Activated B cell treated with CpG ODN at 0.5 μM for 24 hours (primary cell): ENCODE measurements at regions of chr22 and their contacts with region 1.

Region 1: DNA sequence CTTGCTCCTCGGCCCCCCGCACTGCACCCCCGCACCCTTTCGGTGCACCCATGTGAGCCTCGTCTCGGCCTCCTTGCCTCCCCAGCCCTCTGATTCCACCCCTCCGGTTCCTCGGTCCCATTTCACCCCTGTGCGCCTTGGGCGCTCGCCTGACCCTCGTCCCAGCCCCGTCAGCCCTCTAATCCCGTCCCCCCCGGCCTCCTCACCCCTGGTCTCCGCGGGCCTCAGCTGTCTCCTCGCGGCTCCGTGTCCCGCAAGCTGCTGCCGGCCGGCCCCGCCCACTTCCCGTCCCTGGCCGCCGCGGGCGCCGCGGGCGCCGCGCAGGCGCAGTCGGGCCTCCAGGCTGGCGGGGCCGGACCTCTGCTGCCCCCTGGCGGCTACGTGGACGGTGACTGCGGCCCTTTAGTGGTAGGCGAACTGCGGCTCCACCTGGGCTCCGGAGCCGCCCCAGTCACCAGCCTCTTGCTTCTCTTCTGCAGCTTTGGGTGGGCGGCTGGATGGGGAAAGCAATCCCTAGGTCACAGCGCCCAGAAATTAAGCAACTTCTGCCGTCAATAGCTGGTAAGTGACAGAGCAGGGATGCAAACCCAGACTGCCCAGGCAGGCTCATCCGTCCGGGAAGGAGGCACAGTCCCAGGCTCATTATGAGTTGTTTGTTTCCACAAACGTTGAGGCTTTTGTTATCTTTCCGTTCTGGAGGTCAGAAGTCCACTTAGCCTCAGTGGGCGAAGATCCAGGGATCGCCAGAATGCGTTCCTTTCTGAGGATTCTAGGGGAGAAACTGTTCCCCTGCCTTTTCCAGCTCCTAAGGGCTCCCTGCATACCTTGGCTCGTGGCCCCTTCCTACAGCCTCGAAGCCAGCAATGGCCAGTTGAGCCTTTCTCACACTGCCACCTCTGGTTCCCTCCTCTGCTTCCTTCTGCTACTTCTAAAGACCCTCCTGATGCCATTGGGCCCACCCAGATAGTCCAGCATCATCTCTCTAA is at the start of gene PPM1F:
- DNase-seq: peak; percentile 98
- ATAC-seq: peak; percentile 86
- H3K4me3 Mint-ChIP-seq: peak within 1 kb of the TSS; percentile 93
- H3K27ac Mint-ChIP-seq: peak within 1 kb of the TSS; percentile 76
- H3K4me1 Mint-ChIP-seq: peaks cover 15% of the 10 kb centered on the region
- H3K27me3 Mint-ChIP-seq: no peaks in the 10 kb centered on the region
- CTCF ChIP-seq: no peak
- total RNA-seq, gene PPM1F: 18.2 and 21.1 TPM in 2 replicates

Region 2: GRCh38 chr22:21712894-21713712 is 239.8 kb before region 1 on chr22:
- CTCF ChIA-PET with region 1: interaction called, 13 read pairs
- POLR2A ChIA-PET with region 1: interaction called, 4 read pairs
- intact Hi-C with region 1: loop called (anchors 2 kb)
- DNase-seq: no peak
- ATAC-seq: peak; percentile 95
- H3K4me3 Mint-ChIP-seq: peak overlapping the region; percentile 28
- H3K27ac Mint-ChIP-seq: peak overlapping the region; percentile 27
- H3K4me1 Mint-ChIP-seq: peaks cover 7% of the 10 kb centered on the region
- H3K27me3 Mint-ChIP-seq: no peaks in the 10 kb centered on the region
- CTCF ChIP-seq: peak; percentile 25

Region 3: GRCh38 chr22:21719024-21719423 is 233.9 kb before region 1 on chr22:
- CTCF ChIA-PET with region 1: interaction called, 12 read pairs
- POLR2A ChIA-PET with region 1: no interaction called
- intact Hi-C with region 1: no loop called
- DNase-seq: no peak
- ATAC-seq: peak; percentile 37
- H3K4me3 Mint-ChIP-seq: peak overlapping the region; percentile 9
- H3K27ac Mint-ChIP-seq: peak overlapping the region; percentile 64
- H3K4me1 Mint-ChIP-seq: peaks cover 16% of the 10 kb centered on the region
- H3K27me3 Mint-ChIP-seq: no peaks in the 10 kb centered on the region
- CTCF ChIP-seq: no peak

Region 4: GRCh38 chr22:21766691-21767462 is 186.0 kb before region 1 on chr22:
- CTCF ChIA-PET with region 1: interaction called, 3 read pairs
- POLR2A ChIA-PET with region 1: no interaction called
- intact Hi-C with region 1: loop called (anchors 5 kb)
- DNase-seq: no peak
- ATAC-seq: no peak
- H3K4me3 Mint-ChIP-seq: no peak overlapping the region
- H3K27ac Mint-ChIP-seq: peak overlapping the region; percentile 8
- H3K4me1 Mint-ChIP-seq: no peaks in the 10 kb centered on the region
- H3K27me3 Mint-ChIP-seq: no peaks in the 10 kb centered on the region
- CTCF ChIP-seq: no peak

Region 5: DNA sequence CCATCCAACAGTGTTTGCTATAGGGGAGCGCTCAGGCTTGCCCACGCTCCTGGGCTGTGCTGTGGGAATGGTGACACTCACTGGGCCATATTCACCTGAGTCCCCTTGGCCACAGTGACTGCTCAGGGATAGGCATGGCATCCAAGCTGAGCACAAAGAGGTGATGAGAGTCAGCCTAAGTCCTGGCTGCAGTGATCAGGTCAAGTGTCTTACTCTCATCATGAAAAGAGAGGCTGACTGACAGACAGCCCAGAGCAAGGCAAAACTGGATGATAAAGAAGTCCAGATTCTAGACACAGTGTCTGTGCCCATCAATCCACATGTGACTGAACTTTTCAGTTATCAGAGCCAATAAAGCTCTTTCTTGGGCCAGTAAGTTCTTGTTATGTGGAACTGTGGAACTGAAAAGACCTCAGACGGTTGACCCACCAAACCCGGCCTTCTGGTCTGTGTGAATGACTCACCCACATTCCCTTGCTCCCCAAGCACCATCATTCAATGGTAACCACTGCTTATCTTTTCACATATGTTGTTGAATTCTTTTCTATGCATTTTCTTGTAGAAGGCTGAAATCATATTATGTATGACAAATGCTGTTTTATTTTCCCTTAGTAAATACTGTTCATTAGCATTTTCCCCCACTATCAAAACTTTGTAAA is 174.0 kb before region 1 on chr22:
- CTCF ChIA-PET with region 1: interaction called, 12 read pairs
- POLR2A ChIA-PET with region 1: interaction called, 3 read pairs
- intact Hi-C with region 1: loop called (anchors 5 kb)
- DNase-seq: no peak
- ATAC-seq: no peak
- H3K4me3 Mint-ChIP-seq: no peak overlapping the region
- H3K27ac Mint-ChIP-seq: no peak overlapping the region
- H3K4me1 Mint-ChIP-seq: peaks cover 7% of the 10 kb centered on the region
- H3K27me3 Mint-ChIP-seq: no peaks in the 10 kb centered on the region
- CTCF ChIP-seq: no peak